ENCODE measurements at regions of chr1 and their contacts with region 1.

Region 1: GRCh38 chr1:151372061-151372934 is at the start of gene SELENBP1:
- DNase-seq: peak; percentile 94
- H3K4me3 Mint-ChIP-seq: peak within 1 kb of the TSS; percentile 69
- H3K27ac Mint-ChIP-seq: peak within 1 kb of the TSS; percentile 13
- H3K4me1 Mint-ChIP-seq: peaks cover 25% of the 10 kb centered on the region
- H3K27me3 Mint-ChIP-seq: peaks cover 7% of the 10 kb centered on the region
- CTCF ChIP-seq: no peak
- total RNA-seq, gene SELENBP1: 8.2 and 11.6 TPM in 2 replicates

Region 2: DNA sequence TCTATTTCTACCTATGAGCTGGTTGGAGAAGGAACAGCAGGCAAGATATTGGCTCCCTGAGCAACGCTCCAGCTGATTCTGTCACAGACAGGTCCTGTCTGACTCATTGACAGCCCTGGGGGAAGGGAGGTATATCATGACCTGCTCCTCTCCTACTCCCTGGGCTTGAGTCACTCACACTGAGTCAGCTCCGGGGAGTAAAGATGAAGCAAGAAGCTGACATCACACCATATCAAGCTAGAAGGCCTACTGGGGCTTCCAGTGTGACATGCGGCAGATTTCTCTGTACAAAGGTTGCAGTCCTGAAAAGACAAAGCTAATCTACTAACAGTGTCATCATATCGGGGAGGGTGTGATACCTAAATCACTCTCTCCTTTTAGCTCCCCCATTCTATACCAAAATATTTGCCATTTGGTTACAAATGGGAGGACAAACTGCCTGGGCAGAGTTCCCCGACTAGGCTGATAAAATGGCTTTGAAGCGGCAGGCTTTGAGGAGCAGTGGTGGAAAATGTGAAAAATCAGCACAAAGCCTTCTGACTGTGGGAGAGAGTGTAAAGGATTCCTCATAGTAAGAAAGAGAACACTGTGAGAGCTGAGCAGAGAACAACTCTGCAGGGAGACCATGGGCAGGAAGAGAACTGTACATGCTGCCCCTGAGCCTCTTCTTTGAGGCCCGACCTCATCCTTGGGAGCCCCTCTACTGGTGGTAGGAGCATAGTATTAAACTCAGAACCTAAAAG is 60.5 kb before region 1 on chr1:
- CTCF ChIA-PET with region 1: interaction called, 4 read pairs
- POLR2A ChIA-PET with region 1: interaction called, 10 read pairs
- intact Hi-C with region 1: no loop called
- DNase-seq: peak; percentile 100
- H3K4me3 Mint-ChIP-seq: no peak overlapping the region
- H3K27ac Mint-ChIP-seq: peak overlapping the region; percentile 95
- H3K4me1 Mint-ChIP-seq: peaks cover 40% of the 10 kb centered on the region
- H3K27me3 Mint-ChIP-seq: no peaks in the 10 kb centered on the region
- CTCF ChIP-seq: no peak

Region 3: DNA sequence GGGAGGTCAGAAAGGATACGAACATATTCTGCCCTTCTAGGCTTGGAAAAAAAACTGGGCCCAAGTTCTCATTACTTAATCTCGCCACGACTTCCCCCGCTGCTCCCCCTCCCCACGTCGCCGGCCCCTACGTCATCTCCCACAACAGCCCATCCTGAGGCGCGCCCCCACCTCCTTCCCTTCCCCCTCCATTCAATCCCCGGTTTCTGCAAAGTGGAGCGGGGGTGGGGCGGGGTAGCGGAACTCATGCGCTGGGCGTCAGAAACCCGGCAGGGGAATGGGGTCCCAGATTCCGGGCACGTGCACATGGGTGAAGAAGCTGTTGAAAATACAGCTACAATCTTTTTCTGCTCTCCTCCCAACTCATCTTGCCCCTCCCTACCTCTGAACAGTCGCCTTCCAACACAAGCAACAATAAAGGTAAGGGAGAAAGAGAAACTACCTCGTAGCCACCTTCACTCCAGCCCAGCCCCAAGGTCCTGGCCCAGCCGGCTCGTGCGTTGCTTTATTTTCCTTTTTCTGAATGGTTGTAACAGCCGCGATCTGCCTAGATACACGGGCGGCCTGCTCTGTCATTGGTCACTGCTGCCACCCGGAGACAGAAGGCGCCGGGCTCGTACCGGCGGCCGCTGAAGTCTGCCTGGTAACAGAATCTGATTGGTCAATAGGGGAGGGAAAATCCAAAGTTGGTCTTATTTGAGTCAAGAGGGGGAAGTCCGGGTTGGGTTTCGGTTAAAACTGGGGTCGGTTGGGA is 25.4 kb before region 1 on chr1 and contains the start of gene RFX5:
- CTCF ChIA-PET with region 1: interaction called, 28 read pairs
- POLR2A ChIA-PET with region 1: interaction called, 30 read pairs
- intact Hi-C with region 1: loop called (anchors 2 kb)
- DNase-seq: peak; percentile 99
- H3K4me3 Mint-ChIP-seq: peak within 1 kb of the TSS; percentile 94
- H3K27ac Mint-ChIP-seq: peak within 1 kb of the TSS; percentile 97
- H3K4me1 Mint-ChIP-seq: peaks cover 28% of the 10 kb centered on the region
- H3K27me3 Mint-ChIP-seq: no peaks in the 10 kb centered on the region
- CTCF ChIP-seq: no peak
- total RNA-seq, gene RFX5: 19.2 and 26.5 TPM in 2 replicates

Region 4: DNA sequence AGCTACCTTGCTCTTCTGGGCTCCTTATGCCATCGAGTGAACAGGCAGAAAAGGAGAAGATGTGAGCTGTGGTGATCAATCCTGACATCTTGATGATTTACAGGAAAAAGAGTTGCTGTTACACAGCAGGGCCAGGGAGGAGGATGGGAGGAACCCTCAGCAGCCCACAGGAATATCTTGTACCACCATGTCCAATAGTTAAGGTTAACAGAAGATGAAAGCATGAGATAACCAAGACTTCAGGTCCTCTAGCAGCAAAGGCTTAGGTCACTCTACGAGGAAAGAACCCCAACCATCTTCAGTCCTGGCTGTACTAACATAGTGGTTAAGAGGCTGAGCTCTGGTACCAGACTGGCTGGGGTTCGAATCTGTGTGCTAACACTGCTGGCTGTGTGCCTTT is 12.3 kb after region 1 on chr1:
- CTCF ChIA-PET with region 1: interaction called, 5 read pairs
- POLR2A ChIA-PET with region 1: interaction called, 21 read pairs
- intact Hi-C with region 1: no loop called
- DNase-seq: no peak
- H3K4me3 Mint-ChIP-seq: no peak overlapping the region
- H3K27ac Mint-ChIP-seq: no peak overlapping the region
- H3K4me1 Mint-ChIP-seq: no peaks in the 10 kb centered on the region
- H3K27me3 Mint-ChIP-seq: no peaks in the 10 kb centered on the region
- CTCF ChIP-seq: no peak

Region 5: DNA sequence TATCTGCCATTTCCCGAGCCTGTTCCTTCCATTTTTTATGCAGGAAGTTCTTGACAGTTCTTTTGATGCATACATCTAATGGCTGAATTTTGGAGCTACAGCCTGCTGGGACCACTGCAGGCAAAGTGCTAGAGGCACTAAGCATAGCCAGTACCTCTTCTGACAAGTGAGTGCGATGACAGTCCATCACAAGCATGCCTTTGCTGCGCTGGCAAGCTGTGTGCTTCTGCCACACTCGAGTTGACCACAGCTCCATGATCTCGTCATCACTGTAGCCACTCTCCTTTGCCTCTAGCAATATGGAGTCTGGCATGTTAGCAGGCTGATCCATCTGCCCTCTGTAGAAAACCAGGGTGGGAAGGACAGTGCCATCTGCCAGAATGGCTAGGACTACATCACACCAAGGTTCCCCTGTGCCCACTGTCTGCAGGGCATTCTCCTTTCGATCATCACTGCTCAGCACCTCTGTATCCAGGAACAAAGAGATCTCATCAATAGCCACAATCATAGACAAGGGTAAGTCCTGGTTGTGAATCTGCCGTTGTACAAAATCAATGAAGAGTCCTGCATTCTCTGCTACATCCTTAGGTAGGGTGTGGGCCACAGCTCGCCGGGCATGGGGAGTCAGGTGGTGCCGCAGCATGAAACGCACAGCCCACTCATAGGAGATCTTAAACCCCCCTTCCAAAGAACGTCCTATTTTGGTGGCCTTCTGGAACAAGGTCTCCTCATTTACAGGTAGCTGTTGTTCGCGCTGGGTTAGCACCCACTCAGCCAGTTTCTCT is 33.1 kb after region 1 on chr1:
- CTCF ChIA-PET with region 1: interaction called, 7 read pairs
- POLR2A ChIA-PET with region 1: interaction called, 60 read pairs
- intact Hi-C with region 1: no loop called
- DNase-seq: no peak
- H3K4me3 Mint-ChIP-seq: no peak overlapping the region
- H3K27ac Mint-ChIP-seq: no peak overlapping the region
- H3K4me1 Mint-ChIP-seq: peaks cover 19% of the 10 kb centered on the region
- H3K27me3 Mint-ChIP-seq: no peaks in the 10 kb centered on the region
- CTCF ChIP-seq: no peak

Measured in MCF 10A (cell line).